ENCODE measurements at regions of chr5 and their contacts with region 1.

Region 1: GRCh38 chr5:37355166-37355565 is 15.7 kb downstream of the NUP155 start:
- DNase-seq: no peak
- ATAC-seq: no peak
- H3K4me3 ChIP-seq: no peak overlapping the region
- H3K27ac ChIP-seq: no peak overlapping the region
- H3K4me1 ChIP-seq: no peaks in the 10 kb centered on the region
- H3K27me3 ChIP-seq: no peaks in the 10 kb centered on the region
- CTCF ChIP-seq: no peak
- POLR2A ChIP-seq: no peak
- RAD21 ChIP-seq: no peak

Region 2: GRCh38 chr5:36839489-36840476 is 515.4 kb before region 1 on chr5:
- CTCF ChIA-PET with region 1: no interaction called
- POLR2A ChIA-PET with region 1: no interaction called
- dilution Hi-C with region 1: no loop called
- in situ Hi-C with region 1: no loop called
- intact Hi-C with region 1: no loop called
- DNase-seq: no peak
- ATAC-seq: no peak
- H3K4me3 ChIP-seq: no peak overlapping the region
- H3K27ac ChIP-seq: no peak overlapping the region
- H3K4me1 ChIP-seq: no peaks in the 10 kb centered on the region
- H3K27me3 ChIP-seq: peaks cover 14% of the 10 kb centered on the region
- CTCF ChIP-seq: no peak
- POLR2A ChIP-seq: no peak
- RAD21 ChIP-seq: no peak

Region 3: GRCh38 chr5:37165761-37166160 is 189.4 kb before region 1 on chr5:
- CTCF ChIA-PET with region 1: no interaction called
- POLR2A ChIA-PET with region 1: no interaction called
- dilution Hi-C with region 1: no loop called
- in situ Hi-C with region 1: no loop called
- intact Hi-C with region 1: no loop called
- DNase-seq: no peak
- ATAC-seq: no peak
- H3K4me3 ChIP-seq: no peak overlapping the region
- H3K27ac ChIP-seq: no peak overlapping the region
- H3K4me1 ChIP-seq: no peaks in the 10 kb centered on the region
- H3K27me3 ChIP-seq: no peaks in the 10 kb centered on the region
- CTCF ChIP-seq: no peak
- POLR2A ChIP-seq: no peak
- RAD21 ChIP-seq: no peak

Region 4: GRCh38 chr5:37319037-37319782 is 36.0 kb before region 1 on chr5:
- CTCF ChIA-PET with region 1: no interaction called
- POLR2A ChIA-PET with region 1: no interaction called
- dilution Hi-C with region 1: no loop called
- in situ Hi-C with region 1: no loop called
- intact Hi-C with region 1: loop called (anchors 5 kb)
- DNase-seq: peak; percentile 5
- ATAC-seq: no peak
- H3K4me3 ChIP-seq: no peak overlapping the region
- H3K27ac ChIP-seq: no peak overlapping the region
- H3K4me1 ChIP-seq: no peaks in the 10 kb centered on the region
- H3K27me3 ChIP-seq: no peaks in the 10 kb centered on the region
- CTCF ChIP-seq: no peak
- POLR2A ChIP-seq: no peak
- RAD21 ChIP-seq: no peak

Region 5: GRCh38 chr5:37436146-37436934 is 81.2 kb after region 1 on chr5:
- CTCF ChIA-PET with region 1: no interaction called
- POLR2A ChIA-PET with region 1: no interaction called
- dilution Hi-C with region 1: no loop called
- in situ Hi-C with region 1: no loop called
- intact Hi-C with region 1: no loop called
- DNase-seq: no peak
- ATAC-seq: no peak
- H3K4me3 ChIP-seq: no peak overlapping the region
- H3K27ac ChIP-seq: no peak overlapping the region
- H3K4me1 ChIP-seq: peaks cover 7% of the 10 kb centered on the region
- H3K27me3 ChIP-seq: no peaks in the 10 kb centered on the region
- CTCF ChIP-seq: no peak
- POLR2A ChIP-seq: no peak
- RAD21 ChIP-seq: no peak